Activated CD4-positive, alpha-beta memory T cell treated with anti-CD3 and anti-CD28 coated beads for 36 hours (primary cell): ENCODE measurements at regions of chr4 and their contacts with region 1.

Region 1: DNA sequence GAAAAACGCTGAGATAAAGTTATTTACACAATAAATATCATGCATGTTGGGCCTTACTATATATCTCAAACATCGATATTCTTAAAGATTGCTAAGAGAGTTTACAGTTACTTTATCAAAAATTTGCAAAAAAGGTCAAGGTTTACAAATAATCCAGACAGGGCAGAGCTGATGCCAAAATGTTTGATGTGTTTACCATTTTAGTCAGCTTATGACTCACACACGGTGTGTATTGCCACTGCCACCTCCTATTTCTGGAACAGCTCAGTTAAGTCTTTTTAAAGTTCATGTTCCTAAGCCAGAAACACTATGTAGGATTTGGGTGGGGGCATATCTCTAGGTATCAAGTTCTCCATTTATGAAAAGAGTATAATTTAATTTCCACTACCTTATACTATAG is 580.6 kb downstream of the INPP4B start:
- DNase-seq: peak; percentile 40
- H3K4me3 Mint-ChIP-seq: peak overlapping the region; percentile 7
- H3K27ac Mint-ChIP-seq: peak overlapping the region; percentile 85
- H3K4me1 Mint-ChIP-seq: peaks cover 88% of the 10 kb centered on the region
- H3K27me3 Mint-ChIP-seq: no peaks in the 10 kb centered on the region

Region 2: DNA sequence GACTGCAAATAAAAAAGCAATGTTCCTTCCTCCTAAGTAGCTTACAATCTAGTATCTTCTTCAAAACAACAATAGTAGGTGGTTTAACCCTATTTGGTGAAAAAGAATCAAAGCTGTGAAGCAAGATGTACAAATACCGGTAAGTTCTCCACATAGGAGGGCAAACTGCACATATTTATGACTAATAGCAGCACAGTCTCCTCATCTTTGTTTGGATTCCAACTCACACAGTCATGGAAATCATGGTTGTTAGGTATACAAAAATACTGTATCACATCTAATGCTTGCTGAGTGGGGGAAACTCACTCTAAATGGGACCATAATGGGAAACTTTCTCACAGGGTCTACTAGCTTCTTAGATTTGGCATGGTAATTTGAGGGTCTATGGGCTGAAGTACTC is 16.6 kb before region 1 on chr4:
- CTCF ChIA-PET with region 1: no interaction called
- POLR2A ChIA-PET with region 1: no interaction called
- intact Hi-C with region 1: no loop called
- DNase-seq: no peak
- H3K4me3 Mint-ChIP-seq: no peak overlapping the region
- H3K27ac Mint-ChIP-seq: no peak overlapping the region
- H3K4me1 Mint-ChIP-seq: peaks cover 22% of the 10 kb centered on the region
- H3K27me3 Mint-ChIP-seq: no peaks in the 10 kb centered on the region

Region 3: GRCh38 chr4:142293536-142293935 is 28.0 kb after region 1 on chr4:
- CTCF ChIA-PET with region 1: interaction called, 3 read pairs
- POLR2A ChIA-PET with region 1: interaction called, 5 read pairs
- intact Hi-C with region 1: loop called (anchors 1 kb)
- DNase-seq: no peak
- H3K4me3 Mint-ChIP-seq: no peak overlapping the region
- H3K27ac Mint-ChIP-seq: peak overlapping the region; percentile 32
- H3K4me1 Mint-ChIP-seq: peaks cover 76% of the 10 kb centered on the region
- H3K27me3 Mint-ChIP-seq: no peaks in the 10 kb centered on the region